ENCODE measurements at regions of chr10 and their contacts with region 1.

Region 1: DNA sequence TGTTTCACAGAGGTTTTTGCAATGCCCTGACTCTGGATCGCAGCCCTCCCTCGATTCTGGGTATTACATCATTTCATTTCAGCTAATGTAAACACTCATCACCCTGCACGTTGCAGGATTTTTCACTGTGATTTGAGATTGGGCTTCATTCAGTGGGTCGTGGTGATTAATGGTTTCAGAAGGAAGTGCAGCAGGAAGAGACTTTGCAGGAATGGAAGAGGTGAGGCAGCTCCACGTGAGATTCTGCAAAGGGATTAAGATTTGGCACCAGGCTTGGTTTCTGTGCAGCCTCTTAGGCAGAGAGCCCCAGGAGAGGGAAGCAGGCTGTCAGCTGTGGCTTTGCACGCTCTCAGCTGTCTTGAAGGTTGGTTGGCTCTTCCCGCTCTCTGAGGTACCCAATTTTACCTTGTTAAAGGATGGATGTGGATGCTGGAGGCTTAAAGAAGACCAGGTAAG is 95.2 kb downstream of the PLCE1 start:
- DNase-seq: no peak
- ATAC-seq: peak in 3 of 4 donors; percentile 46 to 56 (median 55)
- H3K4me3 ChIP-seq: peak overlapping the region in 9 of 12 donors; percentile 19 to 50 (median 37)
- H3K27ac ChIP-seq: peak overlapping the region in 3 of 12 donors; percentile 1 to 50 (median 5)
- H3K4me1 ChIP-seq: peaks cover 0 to 39% (median 9%) of the 10 kb centered on the region in 12 donors
- H3K27me3 ChIP-seq: no peaks in the 10 kb centered on the region
- CTCF ChIP-seq: no peak
- POLR2A ChIP-seq: no peak

Region 2: DNA sequence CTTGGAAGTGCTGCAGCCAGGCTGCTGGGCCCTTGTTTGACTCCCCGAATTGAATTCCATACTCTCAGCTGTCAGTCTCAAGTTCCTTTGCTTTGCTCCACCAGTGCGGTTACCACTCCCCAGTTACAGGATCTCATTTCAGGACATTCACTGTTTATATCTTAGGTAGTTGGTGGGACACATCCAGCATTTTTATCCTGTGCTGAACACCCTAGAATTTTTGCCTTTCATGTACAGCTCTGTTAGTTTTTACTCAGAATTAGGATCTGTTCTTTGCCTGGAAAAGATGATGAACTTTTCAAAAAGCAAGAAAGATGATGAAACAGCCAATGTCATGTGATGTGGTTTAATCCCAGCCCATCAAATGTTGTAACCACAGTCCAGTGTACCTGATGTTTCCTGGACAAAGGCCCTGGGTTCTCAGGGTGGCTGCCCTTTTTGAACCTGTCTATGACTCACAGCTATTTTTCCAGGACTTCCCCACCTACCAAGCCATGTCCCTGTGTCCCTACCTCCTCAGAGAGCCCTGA is 124.1 kb after region 1 on chr10:
- intact Hi-C with region 1: loop called in 1 of 10 experiments (anchors 10 kb)
- DNase-seq: no peak
- ATAC-seq: peak in 1 of 4 donors; percentile 23
- H3K4me3 ChIP-seq: no peak overlapping the region
- H3K27ac ChIP-seq: peak overlapping the region in 2 of 12 donors; percentile 16 to 24
- H3K4me1 ChIP-seq: peaks cover 0 to 45% (median 25%) of the 10 kb centered on the region in 12 donors
- H3K27me3 ChIP-seq: no peaks in the 10 kb centered on the region
- CTCF ChIP-seq: no peak
- POLR2A ChIP-seq: no peak

Region 3: GRCh38 chr10:94315024-94315451 is 226.1 kb after region 1 on chr10:
- intact Hi-C with region 1: loop called in 2 of 10 experiments (anchors 5 to 10 kb)
- DNase-seq: no peak
- ATAC-seq: peak in 2 of 4 donors; percentile 11 to 47
- H3K4me3 ChIP-seq: no peak overlapping the region
- H3K27ac ChIP-seq: peak overlapping the region in 6 of 12 donors; percentile 2 to 45 (median 24)
- H3K4me1 ChIP-seq: peaks cover 0 to 24% (median 0%) of the 10 kb centered on the region in 12 donors
- H3K27me3 ChIP-seq: no peaks in the 10 kb centered on the region
- CTCF ChIP-seq: no peak
- POLR2A ChIP-seq: no peak